ENCODE measurements at regions of chr7 and their contacts with region 1.

Region 1: DNA sequence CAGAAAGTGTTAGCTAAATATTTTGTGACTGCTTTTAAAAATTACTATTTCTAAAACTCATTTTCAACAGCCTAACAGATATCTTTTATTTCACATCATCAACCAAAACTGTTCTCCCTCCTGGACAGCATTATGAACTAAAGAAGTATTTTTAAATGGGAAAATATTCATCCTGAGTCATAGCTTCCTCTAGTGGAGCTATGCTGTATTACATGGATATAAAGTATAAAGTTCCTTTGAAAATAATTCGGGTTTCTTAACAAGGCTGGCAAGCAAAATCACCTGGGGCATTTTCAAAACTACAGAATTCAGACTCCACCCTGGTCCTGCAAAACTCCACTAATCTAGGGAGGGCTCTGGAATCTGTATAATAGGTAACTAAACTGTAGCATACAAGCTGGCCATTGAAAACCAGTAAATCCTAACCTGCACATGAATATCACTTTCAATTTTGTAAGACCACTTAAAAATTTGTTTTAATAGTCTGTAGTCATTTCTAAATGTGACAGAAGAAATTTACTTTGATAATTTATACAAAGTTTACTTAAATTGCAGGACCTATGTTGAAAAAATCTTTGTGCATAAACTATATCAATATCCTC is 53.5 kb downstream of the SCIN start:
- DNase-seq: no peak
- ATAC-seq: no peak
- H3K4me3 ChIP-seq: no peak overlapping the region
- H3K27ac ChIP-seq: no peak overlapping the region
- H3K4me1 ChIP-seq: no peaks in the 10 kb centered on the region
- H3K27me3 ChIP-seq: no peaks in the 10 kb centered on the region
- CTCF ChIP-seq: peak; percentile 59

Region 2: DNA sequence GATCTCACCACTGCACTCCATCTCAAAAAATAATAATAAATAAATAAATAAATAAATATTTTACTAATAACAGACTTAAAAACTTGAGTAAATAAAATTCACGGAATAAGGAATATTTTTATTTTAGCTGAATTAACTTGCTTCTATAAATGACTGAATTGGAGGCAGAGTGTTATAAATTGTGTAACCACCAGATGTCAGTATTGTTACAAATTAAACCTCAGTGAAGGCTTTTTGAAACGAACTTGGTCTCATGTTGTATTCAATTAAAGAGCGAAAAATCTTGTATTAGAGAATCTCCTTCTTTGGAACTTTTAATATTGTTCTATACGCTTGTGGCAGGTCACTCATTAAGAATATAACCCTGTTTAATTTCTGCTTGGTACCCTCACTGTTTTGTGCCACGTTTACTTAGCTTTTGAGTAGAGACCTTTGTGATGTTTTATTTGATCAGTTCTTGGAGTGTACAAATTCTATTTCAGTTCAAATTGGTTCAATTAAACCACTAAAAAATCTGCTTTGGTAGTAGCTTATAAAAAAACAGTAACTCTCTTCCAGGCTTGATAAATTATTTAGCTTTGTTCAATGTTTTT is 99.1 kb before region 1 on chr7:
- intact Hi-C with region 1: loop called in 1 of 2 experiments (anchors 5 kb)
- DNase-seq: no peak
- ATAC-seq: no peak
- H3K4me3 ChIP-seq: no peak overlapping the region
- H3K27ac ChIP-seq: no peak overlapping the region
- H3K4me1 ChIP-seq: no peaks in the 10 kb centered on the region
- H3K27me3 ChIP-seq: no peaks in the 10 kb centered on the region
- CTCF ChIP-seq: peak; percentile 66